HepG2 (cell line): ENCODE measurements at regions of chr9 and their contacts with region 1.

Region 1: GRCh38 chr9:4750023-4750673 is 9.1 kb upstream of the AK3 start:
- DNase-seq: no peak
- ATAC-seq: no peak; the same call in 2 of the 3 replicates
- H3K4me3 ChIP-seq: no peak overlapping the region
- H3K27ac ChIP-seq: no peak overlapping the region
- H3K4me1 ChIP-seq: no peaks in the 10 kb centered on the region
- H3K27me3 ChIP-seq: no peaks in the 10 kb centered on the region
- CTCF ChIP-seq: peak; percentile 57
- EP300 ChIP-seq: no peak
- POLR2A ChIP-seq: no peak
- RAD21 ChIP-seq: peak; percentile 33; the same call in 1 of the 2 replicates

Region 2: DNA sequence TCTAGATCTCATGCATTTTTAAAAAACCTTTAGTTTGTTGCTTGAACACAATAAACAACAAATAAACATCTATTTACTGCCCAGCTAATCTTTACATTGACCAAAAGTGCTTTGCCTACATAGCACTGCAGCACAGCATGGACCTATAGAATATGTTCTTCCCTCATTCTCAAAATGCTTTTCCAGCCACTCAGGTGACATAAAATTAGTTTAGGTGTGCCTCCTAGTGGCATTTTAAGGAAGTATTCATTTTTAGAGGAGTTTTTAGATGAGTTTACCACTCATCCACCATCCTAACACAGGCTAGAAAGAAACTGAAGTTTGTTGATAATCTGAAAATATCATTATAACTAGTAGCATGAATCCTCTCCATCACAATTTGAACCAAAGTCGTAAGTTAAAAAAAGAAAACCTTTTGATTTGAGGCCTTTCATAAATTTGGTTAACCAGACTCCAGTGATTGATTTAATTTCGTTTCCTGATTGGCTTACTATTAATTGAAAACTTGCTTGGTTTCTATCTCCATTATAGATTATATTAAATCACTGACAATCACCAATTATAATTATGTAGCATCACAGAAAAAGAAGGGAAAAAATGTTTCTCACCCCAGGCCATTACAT is 675.0 kb after region 1 on chr9:
- CTCF ChIA-PET with region 1: no interaction called
- POLR2A ChIA-PET with region 1: no interaction called
- in situ Hi-C with region 1: loop called (anchors 25 kb)
- intact Hi-C with region 1: loop called (anchors 2 kb)
- DNase-seq: peak; percentile 20
- ATAC-seq: peak; percentile 67
- H3K4me3 ChIP-seq: no peak overlapping the region
- H3K27ac ChIP-seq: no peak overlapping the region
- H3K4me1 ChIP-seq: peaks cover 8% of the 10 kb centered on the region; the same call in 1 of the 2 replicates
- H3K27me3 ChIP-seq: no peaks in the 10 kb centered on the region
- CTCF ChIP-seq: peak; percentile 60
- EP300 ChIP-seq: no peak
- POLR2A ChIP-seq: no peak
- RAD21 ChIP-seq: no peak

Region 3: GRCh38 chr9:5608298-5609225 is 858.4 kb after region 1 on chr9:
- CTCF ChIA-PET with region 1: no interaction called
- POLR2A ChIA-PET with region 1: no interaction called
- in situ Hi-C with region 1: no loop called
- intact Hi-C with region 1: loop called (anchors 5 kb)
- DNase-seq: peak; percentile 49
- ATAC-seq: peak; percentile 99
- H3K4me3 ChIP-seq: peak overlapping the region; percentile 52 to 76 (median 66)
- H3K27ac ChIP-seq: peak overlapping the region; percentile 5
- H3K4me1 ChIP-seq: peaks cover 5% of the 10 kb centered on the region
- H3K27me3 ChIP-seq: no peaks in the 10 kb centered on the region
- CTCF ChIP-seq: peak; percentile 58
- EP300 ChIP-seq: no peak
- POLR2A ChIP-seq: no peak
- RAD21 ChIP-seq: no peak